OCI-LY7 (cell line): ENCODE measurements at regions of chr19 and their contacts with region 1.

Region 1: GRCh38 chr19:36054119-36054732 is at the start of gene THAP8:
- DNase-seq: peak; percentile 99
- H3K4me3 ChIP-seq: peak within 1 kb of the TSS; percentile 93
- H3K27ac ChIP-seq: peak within 1 kb of the TSS; percentile 86
- H3K4me1 ChIP-seq: peaks cover 40% of the 10 kb centered on the region
- CTCF ChIP-seq: peak; percentile 65
- total RNA-seq, gene THAP8: 4.9 and 7.3 TPM in 2 replicates

Region 2: DNA sequence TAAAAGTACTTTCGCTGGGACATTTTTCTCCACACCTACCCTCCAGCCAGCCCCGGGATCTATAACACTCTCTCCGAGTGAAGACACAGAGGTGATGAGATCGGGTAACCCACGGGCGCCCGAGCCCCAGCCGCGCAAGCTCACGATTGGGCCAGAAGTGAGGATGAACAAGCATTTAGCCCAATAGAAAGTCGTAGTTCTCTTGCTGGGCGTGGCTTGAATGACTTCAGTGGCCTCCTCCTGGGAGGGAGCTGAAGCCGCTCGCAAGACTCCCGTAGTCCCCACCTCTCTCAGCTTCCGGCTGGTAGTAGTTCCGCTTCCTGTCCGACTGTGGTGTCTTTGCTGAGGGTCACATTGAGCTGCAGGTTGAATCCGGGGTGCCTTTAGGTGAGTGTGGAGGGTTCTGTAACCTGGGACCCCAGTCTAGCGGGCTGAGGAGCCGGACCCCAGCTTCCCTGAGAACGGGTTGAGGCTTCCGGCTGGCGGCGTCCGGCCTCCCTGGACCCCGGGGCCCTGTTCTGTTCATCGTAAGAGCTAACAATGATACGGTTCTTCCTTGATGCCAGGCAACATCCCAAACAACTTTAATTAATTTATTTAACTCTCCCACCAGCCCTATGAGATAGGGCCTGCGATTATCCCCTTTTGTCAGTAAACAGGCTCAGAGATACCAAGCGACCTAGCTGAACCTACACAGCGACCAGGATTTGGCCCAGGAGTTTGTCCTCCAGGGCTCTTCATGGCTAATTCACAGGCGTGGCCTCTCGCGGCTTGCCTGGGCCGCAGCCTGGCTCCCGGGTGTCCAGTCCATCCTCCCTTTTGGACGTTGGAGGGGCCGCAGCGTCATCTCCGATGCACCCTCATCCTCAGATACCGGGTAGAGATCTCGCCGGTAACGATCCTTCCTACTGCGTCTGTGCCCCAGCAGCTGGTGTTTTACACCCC is 405.9 kb before region 1 on chr19 and contains the start of gene COX6B1:
- CTCF ChIA-PET with region 1: no interaction called
- POLR2A ChIA-PET with region 1: no interaction called
- intact Hi-C with region 1: loop called (anchors 10 kb)
- DNase-seq: peak; percentile 99
- H3K4me3 ChIP-seq: peak within 1 kb of the TSS; percentile 89
- H3K27ac ChIP-seq: peak within 1 kb of the TSS; percentile 44
- H3K4me1 ChIP-seq: peaks cover 36% of the 10 kb centered on the region
- CTCF ChIP-seq: no peak
- total RNA-seq, gene COX6B1: 404 and 536 TPM in 2 replicates

Region 3: GRCh38 chr19:35911790-35912189 is 142.4 kb before region 1 on chr19:
- CTCF ChIA-PET with region 1: no interaction called
- POLR2A ChIA-PET with region 1: no interaction called
- intact Hi-C with region 1: no loop called
- DNase-seq: no peak
- H3K4me3 ChIP-seq: no peak overlapping the region
- H3K27ac ChIP-seq: no peak overlapping the region
- H3K4me1 ChIP-seq: peaks cover 36% of the 10 kb centered on the region
- CTCF ChIP-seq: no peak

Region 4: DNA sequence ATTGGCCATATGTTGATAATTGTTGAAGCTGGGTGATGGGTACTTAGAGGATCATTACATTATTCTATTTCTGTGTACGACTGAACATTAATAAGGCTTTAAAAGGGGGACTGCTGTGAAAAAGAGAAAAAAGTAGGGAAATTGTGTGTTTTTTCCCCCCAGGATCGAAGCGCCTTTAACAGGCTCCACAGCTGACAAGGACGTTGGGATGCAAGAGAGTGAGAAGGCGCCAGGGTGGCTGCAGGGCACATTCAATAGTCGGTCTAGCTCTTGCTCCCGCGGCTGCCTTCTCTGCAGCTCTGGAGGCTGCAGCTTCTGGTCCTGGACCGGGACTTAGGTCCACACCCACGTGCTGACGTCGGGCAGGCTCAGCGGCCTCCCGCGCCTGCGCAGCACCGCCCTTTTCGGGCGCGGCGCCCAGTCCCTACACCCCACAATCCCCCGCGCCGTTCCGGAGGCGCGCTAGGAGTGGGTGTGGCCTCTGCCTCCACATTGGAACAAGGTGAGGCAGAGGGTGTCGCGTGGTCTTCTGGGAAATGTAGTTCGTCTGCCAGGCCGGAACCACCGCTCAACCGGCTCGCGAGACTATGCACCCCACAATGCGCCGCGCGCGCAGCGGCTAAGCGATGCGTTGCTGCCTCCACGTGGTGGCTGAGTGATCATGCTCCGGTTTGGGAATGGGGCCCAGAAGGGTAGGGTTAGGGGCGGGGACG is 122.9 kb before region 1 on chr19:
- CTCF ChIA-PET with region 1: no interaction called
- POLR2A ChIA-PET with region 1: no interaction called
- intact Hi-C with region 1: loop called (anchors 1 kb)
- DNase-seq: peak; percentile 100
- H3K4me3 ChIP-seq: peak overlapping the region; percentile 67
- H3K27ac ChIP-seq: peak overlapping the region; percentile 61
- H3K4me1 ChIP-seq: peaks cover 12% of the 10 kb centered on the region
- CTCF ChIP-seq: peak; percentile 95

Region 5: GRCh38 chr19:35995048-35995993 is 58.9 kb before region 1 on chr19 and contains the start of gene SDHAF1:
- CTCF ChIA-PET with region 1: no interaction called
- POLR2A ChIA-PET with region 1: interaction called, 12 read pairs
- intact Hi-C with region 1: loop called (anchors 1 kb)
- DNase-seq: peak; percentile 96
- H3K4me3 ChIP-seq: peak within 1 kb of the TSS; percentile 89
- H3K27ac ChIP-seq: peak within 1 kb of the TSS; percentile 53
- H3K4me1 ChIP-seq: peaks cover 16% of the 10 kb centered on the region
- CTCF ChIP-seq: peak; percentile 32; the same call in 1 of the 2 replicates
- total RNA-seq, gene SDHAF1: 52.6 and 60.9 TPM in 2 replicates

Region 6: GRCh38 chr19:36114763-36115452 is 60.7 kb after region 1 on chr19 and contains the start of gene POLR2I:
- CTCF ChIA-PET with region 1: no interaction called
- POLR2A ChIA-PET with region 1: interaction called, 4 read pairs
- intact Hi-C with region 1: loop called (anchors 2 kb)
- DNase-seq: peak; percentile 99
- H3K4me3 ChIP-seq: peak within 1 kb of the TSS; percentile 80
- H3K27ac ChIP-seq: peak within 1 kb of the TSS; percentile 68
- H3K4me1 ChIP-seq: peaks cover 28% of the 10 kb centered on the region
- CTCF ChIP-seq: no peak
- total RNA-seq, gene POLR2I: 149 and 151 TPM in 2 replicates